K562 (cell line): ENCODE measurements at regions of chr3 and their contacts with region 1.

Region 1: DNA sequence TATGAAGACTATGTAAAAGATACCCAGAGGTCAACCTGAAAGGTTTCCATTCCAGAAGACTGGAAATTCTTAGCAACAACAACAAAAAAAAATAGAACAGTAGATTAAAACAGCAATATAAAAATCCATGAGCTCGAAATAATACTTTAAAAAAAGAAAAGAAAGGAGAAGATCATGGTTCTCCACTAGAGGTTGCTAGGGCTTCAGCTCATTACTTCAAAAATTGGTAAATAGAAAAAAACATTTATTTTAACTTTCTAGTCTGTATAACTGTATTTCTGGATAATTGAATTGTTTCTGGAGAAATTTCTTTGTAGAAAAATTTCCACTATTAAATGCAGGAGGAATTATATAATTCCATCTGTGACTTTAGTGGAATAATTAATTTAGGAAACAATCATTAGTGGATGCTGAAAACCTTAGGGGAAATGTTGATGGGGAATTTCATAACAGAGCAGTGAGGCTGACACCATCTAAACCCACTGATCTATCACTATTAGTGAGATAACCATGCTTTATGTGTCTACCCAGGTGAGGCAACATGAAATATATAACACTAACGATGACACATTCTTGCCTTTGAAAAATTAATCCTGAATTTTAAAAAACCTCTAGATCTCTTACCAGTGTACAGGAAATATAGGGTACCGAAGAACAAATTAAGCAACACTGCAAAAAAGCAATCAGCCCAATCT is 62.5 kb upstream of the SNRK start:
- DNase-seq: no peak
- ATAC-seq: no peak
- H3K4me3 ChIP-seq: no peak overlapping the region
- H3K27ac ChIP-seq: no peak overlapping the region
- H3K4me1 ChIP-seq: no peaks in the 10 kb centered on the region
- H3K27me3 ChIP-seq: peaks cover 5 to 18% of the 10 kb centered on the region in 2 experiments; a peak in 4 of 5 replicates
- CTCF ChIP-seq: peak in 2 of 3 experiments; percentile 14 to 68; a peak in 4 of 6 replicates
- EP300 ChIP-seq: no peak
- POLR2A ChIP-seq: no peak
- RAD21 ChIP-seq: peak; percentile 66 to 73

Region 2: DNA sequence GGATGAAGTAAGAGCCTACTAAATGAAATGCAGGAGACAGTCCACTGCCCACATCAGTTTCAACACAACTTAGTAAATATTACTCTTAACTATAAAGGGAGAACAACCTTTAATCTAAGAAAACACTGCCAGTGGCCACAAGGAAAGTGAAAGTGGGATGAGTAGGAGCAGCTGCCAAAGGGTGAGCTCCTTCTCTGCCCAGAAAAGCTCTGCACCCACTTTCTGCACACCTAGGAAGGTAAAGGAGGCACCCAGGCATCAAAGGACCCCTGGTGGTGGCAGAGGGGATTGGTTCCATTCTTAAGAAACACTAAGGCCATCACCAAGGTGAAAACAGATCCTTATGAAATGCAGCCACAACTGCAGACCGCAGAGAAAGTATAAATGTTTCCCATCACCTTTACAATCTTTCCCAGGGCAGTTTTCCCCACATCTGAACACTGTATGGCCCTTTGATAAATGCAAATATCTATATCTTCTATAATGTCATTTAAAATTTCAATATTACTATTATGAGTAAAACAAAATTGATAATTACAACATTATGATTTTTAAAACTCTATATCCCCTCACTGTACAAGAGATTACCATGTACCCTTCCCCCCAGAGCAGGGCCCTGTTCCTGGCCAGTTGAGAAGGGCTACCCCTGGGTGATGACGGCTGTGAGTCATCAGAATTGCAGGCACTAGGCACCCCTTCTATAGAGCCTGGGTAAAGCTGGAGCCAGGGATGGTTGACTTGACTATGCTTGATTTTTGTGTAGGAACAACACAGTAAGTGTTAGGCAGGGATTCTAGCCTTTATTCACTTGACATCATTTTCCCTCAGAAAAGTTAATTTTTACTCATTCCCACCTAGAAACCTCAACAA is 154.5 kb after region 1 on chr3:
- CTCF ChIA-PET with region 1: no interaction called
- POLR2A ChIA-PET with region 1: no interaction called
- in situ Hi-C with region 1: no loop called
- intact Hi-C with region 1: loop called (anchors 5 kb)
- DNase-seq: peak; percentile 64 to 73 (median 70)
- ATAC-seq: peak; percentile 97
- H3K4me3 ChIP-seq: no peak overlapping the region
- H3K27ac ChIP-seq: no peak overlapping the region
- H3K4me1 ChIP-seq: no peaks in the 10 kb centered on the region
- H3K27me3 ChIP-seq: no peaks in the 10 kb centered on the region
- CTCF ChIP-seq: peak; percentile 76 to 82 (median 77)
- EP300 ChIP-seq: no peak
- POLR2A ChIP-seq: no peak
- RAD21 ChIP-seq: peak; percentile 39 to 75

Region 3: DNA sequence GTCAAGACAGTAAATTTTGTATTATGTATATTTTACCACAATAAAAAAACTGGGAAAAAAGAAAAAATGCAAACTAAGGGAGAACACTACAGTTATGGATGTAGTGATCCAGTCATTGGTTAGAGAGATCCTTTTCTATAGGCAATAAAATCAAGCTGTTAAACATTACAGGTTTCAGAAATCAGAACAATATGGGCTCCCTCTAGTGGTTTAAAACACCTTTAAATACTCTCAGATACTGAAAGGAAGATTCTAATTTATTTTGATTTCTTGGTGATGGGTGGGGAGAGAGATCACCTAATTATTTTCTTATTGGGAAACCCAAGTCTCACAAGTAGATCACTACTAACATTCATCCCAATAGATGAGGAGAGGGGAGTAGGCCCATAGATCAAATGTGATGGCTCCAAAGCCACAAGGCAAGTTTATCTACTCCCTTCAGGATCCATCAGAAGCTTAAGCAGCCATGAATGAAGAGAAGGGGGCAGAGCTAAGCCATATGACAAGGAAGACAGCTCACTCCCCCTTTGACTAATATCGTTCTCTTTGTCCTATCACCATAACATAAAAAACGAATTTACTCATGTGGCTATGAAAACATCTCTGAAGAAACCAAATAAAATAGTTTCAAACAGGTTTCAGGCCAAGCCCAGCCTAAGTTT is 279.4 kb after region 1 on chr3:
- CTCF ChIA-PET with region 1: no interaction called
- POLR2A ChIA-PET with region 1: no interaction called
- in situ Hi-C with region 1: no loop called
- intact Hi-C with region 1: loop called (anchors 5 kb)
- DNase-seq: peak in 1 of 4 experiments; percentile 54
- ATAC-seq: peak; percentile 76
- H3K4me3 ChIP-seq: no peak overlapping the region
- H3K27ac ChIP-seq: no peak overlapping the region
- H3K4me1 ChIP-seq: peaks cover 8 to 23% of the 10 kb centered on the region in 2 experiments; a peak in 3 of 5 replicates
- H3K27me3 ChIP-seq: no peaks in the 10 kb centered on the region
- CTCF ChIP-seq: peak in 2 of 3 experiments; percentile 29 to 70; a peak in 3 of 6 replicates
- EP300 ChIP-seq: no peak
- POLR2A ChIP-seq: no peak
- RAD21 ChIP-seq: peak; percentile 48 to 71

Region 4: GRCh38 chr3:43597961-43598360 is 374.1 kb after region 1 on chr3:
- CTCF ChIA-PET with region 1: no interaction called
- POLR2A ChIA-PET with region 1: no interaction called
- in situ Hi-C with region 1: no loop called
- intact Hi-C with region 1: no loop called
- DNase-seq: no peak
- ATAC-seq: no peak
- H3K4me3 ChIP-seq: no peak overlapping the region
- H3K27ac ChIP-seq: no peak overlapping the region
- H3K4me1 ChIP-seq: no peaks in the 10 kb centered on the region
- H3K27me3 ChIP-seq: no peaks in the 10 kb centered on the region
- CTCF ChIP-seq: no peak
- EP300 ChIP-seq: no peak
- POLR2A ChIP-seq: no peak
- RAD21 ChIP-seq: no peak

Region 5: GRCh38 chr3:43638594-43639447 is 415.0 kb after region 1 on chr3:
- CTCF ChIA-PET with region 1: no interaction called
- POLR2A ChIA-PET with region 1: no interaction called
- in situ Hi-C with region 1: no loop called
- intact Hi-C with region 1: loop called (anchors 1 kb)
- DNase-seq: peak; percentile 66 to 92 (median 75)
- ATAC-seq: peak; percentile 90
- H3K4me3 ChIP-seq: 0 out of 2 replicates have a peak overlapping the region, but pooled peaks have one; percentile 1
- H3K27ac ChIP-seq: peak overlapping the region; percentile 67
- H3K4me1 ChIP-seq: peaks cover 10 to 24% of the 10 kb centered on the region in 2 experiments; a peak in 4 of 5 replicates
- H3K27me3 ChIP-seq: no peaks in the 10 kb centered on the region
- CTCF ChIP-seq: peak; percentile 88 to 97 (median 92)
- EP300 ChIP-seq: peak; percentile 45
- POLR2A ChIP-seq: no peak
- RAD21 ChIP-seq: peak; percentile 89 to 97